H1 (cell line): ENCODE measurements at regions of chr22 and their contacts with region 1.

Region 1: GRCh38 chr22:20981787-20982562 is at the start of gene LZTR1:
- DNase-seq: peak in 1 of 2 experiments; percentile 86
- H3K4me3 ChIP-seq: peak within 1 kb of the TSS; percentile 68 to 86 (median 74)
- H3K27ac ChIP-seq: peak within 1 kb of the TSS; percentile 90
- H3K4me1 ChIP-seq: peaks cover 5 to 25% (median 8%) of the 10 kb centered on the region in 4 experiments; a peak in 6 of 7 replicates
- H3K27me3 ChIP-seq: peaks cover 0 to 14% (median 7%) of the 10 kb centered on the region in 4 experiments; a peak in 5 of 7 replicates
- CTCF ChIP-seq: peak; percentile 62 to 69 (median 65)
- EP300 ChIP-seq: no peak; a peak in 1 of 3 replicates
- POLR2A ChIP-seq: peak in 1 of 2 experiments; percentile 96; a peak in 2 of 3 replicates
- RAD21 ChIP-seq: peak; percentile 42 to 53
- total RNA-seq, gene LZTR1: 29.8 and 31.0 TPM in 2 replicates

Region 2: DNA sequence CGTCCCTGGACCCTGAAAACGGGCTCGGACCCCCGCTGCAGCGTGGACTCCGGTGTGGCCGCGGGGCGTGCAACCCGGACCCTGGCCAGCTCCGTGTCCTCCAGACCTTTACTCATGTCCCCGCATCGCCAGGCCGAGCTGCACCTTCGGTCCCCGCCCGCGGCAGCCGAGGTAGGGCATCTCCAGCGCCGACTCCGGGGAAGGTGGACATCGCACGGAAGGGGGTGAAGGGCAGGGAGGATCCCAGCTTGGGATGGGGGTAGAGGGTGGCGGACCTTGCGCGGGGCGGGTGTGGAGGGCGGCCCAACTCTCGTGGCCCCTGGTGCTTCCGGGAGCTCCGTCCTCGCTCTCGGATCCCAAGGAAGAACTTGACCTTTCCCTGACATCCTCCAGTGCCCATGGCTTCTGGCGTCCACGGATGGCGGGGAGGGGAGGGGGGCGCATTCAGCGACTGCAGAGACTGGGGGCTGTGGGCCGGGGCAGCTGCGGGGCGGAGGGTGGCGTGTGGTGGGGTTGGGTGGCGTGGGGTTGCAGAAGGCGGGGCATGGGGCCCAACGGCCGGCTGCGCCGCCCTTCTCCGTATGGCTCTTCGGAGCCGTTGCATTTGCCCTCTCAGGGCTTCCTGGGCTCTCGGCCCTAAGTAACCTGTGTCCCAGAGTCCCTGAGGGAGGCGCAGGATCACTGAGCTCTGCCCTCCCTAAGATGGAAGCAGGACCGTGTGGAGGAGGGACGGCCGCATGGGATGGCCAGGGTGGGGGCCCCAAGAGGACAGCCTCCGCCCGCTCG is 24.5 kb before region 1 on chr22:
- CTCF ChIA-PET with region 1: interaction called, 115 read pairs
- POLR2A ChIA-PET with region 1: interaction called, 7 read pairs
- DNase-seq: peak in 1 of 2 experiments; percentile 70
- H3K4me3 ChIP-seq: peak overlapping the region; percentile 68 to 79 (median 74)
- H3K27ac ChIP-seq: no peak overlapping the region
- H3K4me1 ChIP-seq: peaks cover 0 to 9% (median 5%) of the 10 kb centered on the region in 4 experiments; a peak in 6 of 7 replicates
- H3K27me3 ChIP-seq: peaks cover 0 to 9% (median 5%) of the 10 kb centered on the region in 4 experiments; a peak in 5 of 7 replicates
- CTCF ChIP-seq: no peak
- EP300 ChIP-seq: no peak
- POLR2A ChIP-seq: no peak
- RAD21 ChIP-seq: no peak

Region 3: DNA sequence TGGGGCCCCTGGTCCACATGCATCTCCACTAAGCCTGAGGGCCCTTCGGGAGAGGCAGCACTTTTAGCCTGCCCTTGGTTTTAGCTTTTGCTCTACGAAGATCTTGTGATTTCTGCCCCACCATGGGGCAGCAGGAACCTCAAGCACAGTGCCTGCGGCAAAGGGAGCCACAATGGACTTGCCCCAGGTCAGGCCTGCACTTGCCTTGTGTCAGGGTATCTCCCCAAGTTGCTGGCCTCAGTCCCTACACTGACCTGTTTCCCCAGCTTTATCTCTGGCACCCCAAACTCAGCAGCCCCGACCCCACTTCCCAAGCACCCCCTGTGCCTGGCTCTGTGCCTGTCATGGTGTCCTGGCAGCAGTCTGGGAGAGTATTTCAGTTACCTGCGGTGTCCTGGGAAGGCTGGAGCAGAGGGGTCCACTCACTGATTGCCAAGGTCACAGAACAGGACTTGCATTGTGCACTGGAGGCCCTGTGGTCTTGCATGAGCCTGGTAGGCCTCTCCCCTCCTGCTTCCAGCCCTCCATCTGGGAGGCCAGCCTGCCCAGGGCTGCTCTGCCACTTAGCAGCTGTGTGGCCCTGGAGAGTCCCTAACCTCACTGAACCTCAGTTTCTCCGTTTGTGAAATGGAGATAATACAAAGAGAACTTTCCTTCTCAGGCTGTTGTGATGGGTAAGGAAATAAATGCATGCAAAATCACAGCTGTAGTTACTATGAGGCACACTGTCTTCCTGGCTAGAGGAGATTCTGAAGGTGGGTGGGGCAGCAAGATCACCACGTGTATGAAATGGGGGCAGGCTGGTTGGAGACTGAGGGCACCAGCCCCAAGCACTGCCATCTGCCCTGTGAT is 18.5 kb before region 1 on chr22:
- CTCF ChIA-PET with region 1: interaction called, 115 read pairs
- POLR2A ChIA-PET with region 1: interaction called, 15 read pairs
- DNase-seq: no peak
- H3K4me3 ChIP-seq: no peak overlapping the region
- H3K27ac ChIP-seq: no peak overlapping the region
- H3K4me1 ChIP-seq: peaks cover 0 to 18% (median 11%) of the 10 kb centered on the region in 4 experiments; a peak in 6 of 7 replicates
- H3K27me3 ChIP-seq: peaks cover 34 to 56% (median 54%) of the 10 kb centered on the region in 4 experiments
- CTCF ChIP-seq: no peak
- EP300 ChIP-seq: no peak
- POLR2A ChIP-seq: no peak
- RAD21 ChIP-seq: no peak

Region 4: DNA sequence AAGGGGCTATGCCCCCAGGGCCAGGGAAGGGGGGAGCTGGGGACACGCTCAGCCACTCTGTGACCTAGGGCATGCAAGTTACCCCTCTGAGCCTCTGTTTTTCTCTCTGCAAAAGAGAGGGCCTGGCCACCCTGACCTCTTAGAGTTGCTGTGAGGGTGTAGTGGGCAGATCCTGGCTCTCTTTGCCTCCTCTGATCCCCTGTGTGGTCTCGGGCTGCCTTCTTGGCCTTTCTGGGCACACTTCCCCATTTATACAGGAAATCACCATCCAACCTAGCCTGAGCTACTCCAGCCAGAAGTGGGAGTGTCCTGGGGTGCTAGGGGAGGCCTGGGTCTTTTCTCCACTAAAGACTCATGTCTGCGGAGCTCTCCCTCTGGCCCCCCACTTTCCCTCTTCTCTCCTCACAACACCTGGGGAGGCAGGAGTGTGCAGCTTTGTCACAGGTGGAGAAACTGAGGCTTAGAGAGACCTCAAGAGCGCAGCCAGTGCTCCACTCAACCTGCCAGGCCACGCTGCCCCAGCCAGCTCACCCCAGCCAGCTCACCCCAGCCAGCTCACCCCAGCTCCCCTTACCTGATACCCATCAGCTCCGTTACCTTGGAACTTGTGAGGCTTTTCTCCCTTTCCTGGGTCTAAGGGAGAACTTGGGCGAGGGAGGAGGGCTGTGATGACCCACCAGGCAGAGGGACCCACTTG is 13.5 kb before region 1 on chr22:
- CTCF ChIA-PET with region 1: interaction called, 115 read pairs
- POLR2A ChIA-PET with region 1: interaction called, 15 read pairs
- DNase-seq: peak in 1 of 2 experiments; percentile 54
- H3K4me3 ChIP-seq: peak overlapping the region in 1 of 4 experiments; percentile 39; a peak in 2 of 8 replicates
- H3K27ac ChIP-seq: no peak overlapping the region
- H3K4me1 ChIP-seq: peaks cover 0 to 19% (median 13%) of the 10 kb centered on the region in 4 experiments; a peak in 6 of 7 replicates
- H3K27me3 ChIP-seq: peaks cover 31 to 64% (median 50%) of the 10 kb centered on the region in 4 experiments
- CTCF ChIP-seq: no peak
- EP300 ChIP-seq: no peak
- POLR2A ChIP-seq: no peak
- RAD21 ChIP-seq: no peak